ENCODE measurements at regions of chr19 and their contacts with region 1.

Region 1: GRCh38 chr19:4139614-4140236 is 13.7 kb upstream of the CREB3L3 start:
- DNase-seq: peak; percentile 94
- ATAC-seq: peak; percentile 81
- H3K4me3 Mint-ChIP-seq: peak overlapping the region; percentile 31; the same call in 1 of the 2 replicates
- H3K27ac Mint-ChIP-seq: peak overlapping the region; percentile 70; the same call in 1 of the 2 replicates
- H3K4me1 Mint-ChIP-seq: peaks cover 6% of the 10 kb centered on the region
- H3K27me3 Mint-ChIP-seq: peaks cover 18% of the 10 kb centered on the region
- CTCF ChIP-seq: peak; percentile 94

Region 2: DNA sequence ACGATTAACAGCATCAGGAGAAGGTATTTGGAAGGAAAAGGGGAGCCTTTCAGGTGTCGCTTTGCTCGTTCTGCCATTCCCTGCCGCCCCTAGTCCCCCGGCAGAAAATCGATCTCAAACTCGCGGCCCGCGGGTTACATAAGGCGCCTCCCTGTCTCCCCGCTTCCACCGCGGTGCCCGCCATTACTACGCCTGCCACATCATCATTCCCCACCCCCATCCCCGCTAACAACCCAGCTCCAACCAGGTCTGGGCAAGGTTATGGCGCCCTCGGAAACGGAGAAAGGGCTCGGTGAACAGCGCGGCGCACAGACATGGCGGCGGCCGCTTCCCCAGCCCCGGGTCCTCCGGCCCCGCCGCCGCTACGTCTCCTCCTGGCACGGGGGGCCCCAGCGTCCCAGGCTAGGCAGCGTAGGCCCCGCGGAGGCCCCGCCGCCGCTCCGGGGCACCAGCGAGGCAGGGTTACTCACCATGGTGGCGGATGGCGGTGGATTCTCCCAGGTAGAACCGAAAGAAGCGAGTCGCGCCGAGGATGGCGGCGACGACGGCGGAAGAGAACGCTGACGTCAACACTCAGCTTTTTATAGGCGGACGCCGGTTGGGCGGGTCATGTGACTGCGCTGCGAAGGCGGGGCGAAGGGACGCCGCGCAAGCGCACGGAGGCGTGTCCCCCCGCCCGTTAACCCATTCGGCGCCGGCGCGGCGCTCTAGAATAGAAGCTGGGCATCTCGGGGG is 154.7 kb before region 1 on chr19 and contains the start of gene EEF2:
- CTCF ChIA-PET with region 1: interaction called, 27 read pairs
- POLR2A ChIA-PET with region 1: interaction called, 4 read pairs
- DNase-seq: peak; percentile 91
- ATAC-seq: 0 out of 2 replicates have a peak, but pooled peaks have one; percentile 5
- H3K4me3 Mint-ChIP-seq: peak within 1 kb of the TSS; percentile 96
- H3K27ac Mint-ChIP-seq: peak within 1 kb of the TSS; percentile 98
- H3K4me1 Mint-ChIP-seq: peaks cover 39% of the 10 kb centered on the region
- H3K27me3 Mint-ChIP-seq: peaks cover 7% of the 10 kb centered on the region
- CTCF ChIP-seq: no peak
- total RNA-seq, gene EEF2: 3,572 to 3,864 TPM (median 3,852 TPM) in 3 replicates

Region 3: DNA sequence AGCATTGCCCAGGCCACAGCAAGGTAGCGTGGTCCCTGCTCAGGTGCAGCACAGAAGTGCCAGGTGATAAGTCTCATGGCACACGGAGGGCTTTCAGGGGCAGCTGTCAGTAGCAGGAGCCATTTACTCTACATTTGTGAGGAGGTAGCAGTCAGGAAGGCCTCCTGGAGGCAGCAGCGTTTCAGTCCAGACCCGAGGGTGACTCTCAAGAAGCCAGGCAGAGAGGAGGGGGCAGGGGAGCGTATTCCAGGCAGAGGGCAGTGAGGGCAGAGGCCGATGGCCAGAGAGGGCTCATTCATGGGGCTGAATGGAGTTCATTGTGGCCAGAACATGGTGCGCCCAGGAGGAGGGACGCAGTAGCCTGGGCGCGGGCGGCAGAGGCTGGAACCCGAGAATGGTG is 123.2 kb before region 1 on chr19:
- CTCF ChIA-PET with region 1: no interaction called
- POLR2A ChIA-PET with region 1: no interaction called
- DNase-seq: no peak
- ATAC-seq: no peak
- H3K4me3 Mint-ChIP-seq: no peak overlapping the region
- H3K27ac Mint-ChIP-seq: no peak overlapping the region
- H3K4me1 Mint-ChIP-seq: 0 out of 2 replicates have a peak, but pooled peaks cover 3% of the 10 kb centered on the region
- H3K27me3 Mint-ChIP-seq: no peaks in the 10 kb centered on the region
- CTCF ChIP-seq: no peak

Region 4: DNA sequence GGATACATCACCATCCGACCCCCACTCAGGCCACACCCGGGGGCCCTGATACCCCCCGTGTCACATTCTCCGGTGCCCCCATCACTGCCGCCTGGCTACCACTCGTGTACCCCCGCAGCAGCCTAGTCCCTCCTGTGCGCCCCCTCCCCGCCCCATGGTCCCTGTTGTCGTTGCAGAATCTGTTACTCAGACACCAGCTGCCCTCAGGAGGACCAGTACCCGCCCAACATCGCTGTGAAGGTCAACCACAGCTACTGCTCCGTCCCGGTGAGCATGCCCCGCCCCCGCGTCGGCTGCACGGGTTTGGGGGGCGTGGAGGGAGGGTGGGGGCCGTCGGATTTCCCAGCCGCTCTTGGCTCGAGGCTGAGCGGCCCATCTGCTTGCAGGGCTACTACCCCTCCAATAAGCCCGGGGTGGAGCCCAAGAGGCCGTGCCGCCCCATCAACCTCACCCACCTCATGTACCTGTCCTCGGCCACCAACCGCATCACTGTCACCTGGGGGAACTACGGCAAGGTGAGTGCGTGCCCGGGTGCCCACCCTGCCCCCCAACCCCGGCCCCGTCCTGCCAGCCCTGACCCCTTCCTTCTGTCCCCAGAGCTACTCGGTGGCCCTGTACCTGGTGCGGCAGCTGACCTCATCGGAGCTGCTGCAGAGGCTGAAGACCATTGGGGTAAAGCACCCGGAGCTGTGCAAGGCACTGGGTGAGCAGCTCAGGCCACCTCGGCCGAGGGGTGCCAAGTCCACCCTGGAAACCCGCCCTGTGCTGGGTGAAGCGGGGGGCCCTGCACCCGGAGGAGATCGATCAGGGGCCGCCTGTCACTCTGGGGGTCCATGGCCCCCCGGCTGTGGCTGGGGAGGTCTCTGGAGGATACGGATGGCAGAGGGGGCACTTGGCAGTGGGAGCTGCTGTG is 111.1 kb before region 1 on chr19:
- CTCF ChIA-PET with region 1: no interaction called
- POLR2A ChIA-PET with region 1: no interaction called
- DNase-seq: no peak
- ATAC-seq: no peak
- H3K4me3 Mint-ChIP-seq: no peak overlapping the region
- H3K27ac Mint-ChIP-seq: no peak overlapping the region
- H3K4me1 Mint-ChIP-seq: no peaks in the 10 kb centered on the region
- H3K27me3 Mint-ChIP-seq: no peaks in the 10 kb centered on the region
- CTCF ChIP-seq: no peak

Region 5: GRCh38 chr19:4065430-4066175 is 74.1 kb before region 1 on chr19:
- CTCF ChIA-PET with region 1: interaction called, 10 read pairs
- POLR2A ChIA-PET with region 1: no interaction called
- DNase-seq: peak; percentile 97
- ATAC-seq: peak; percentile 81
- H3K4me3 Mint-ChIP-seq: no peak overlapping the region
- H3K27ac Mint-ChIP-seq: no peak overlapping the region
- H3K4me1 Mint-ChIP-seq: peaks cover 26% of the 10 kb centered on the region
- H3K27me3 Mint-ChIP-seq: peaks cover 26% of the 10 kb centered on the region
- CTCF ChIP-seq: no peak

Region 6: GRCh38 chr19:4099054-4099764 is 40.5 kb before region 1 on chr19:
- CTCF ChIA-PET with region 1: interaction called, 10 read pairs
- POLR2A ChIA-PET with region 1: interaction called, 3 read pairs
- DNase-seq: no peak
- ATAC-seq: no peak
- H3K4me3 Mint-ChIP-seq: no peak overlapping the region
- H3K27ac Mint-ChIP-seq: no peak overlapping the region
- H3K4me1 Mint-ChIP-seq: no peaks in the 10 kb centered on the region
- H3K27me3 Mint-ChIP-seq: no peaks in the 10 kb centered on the region
- CTCF ChIP-seq: no peak

Region 7: DNA sequence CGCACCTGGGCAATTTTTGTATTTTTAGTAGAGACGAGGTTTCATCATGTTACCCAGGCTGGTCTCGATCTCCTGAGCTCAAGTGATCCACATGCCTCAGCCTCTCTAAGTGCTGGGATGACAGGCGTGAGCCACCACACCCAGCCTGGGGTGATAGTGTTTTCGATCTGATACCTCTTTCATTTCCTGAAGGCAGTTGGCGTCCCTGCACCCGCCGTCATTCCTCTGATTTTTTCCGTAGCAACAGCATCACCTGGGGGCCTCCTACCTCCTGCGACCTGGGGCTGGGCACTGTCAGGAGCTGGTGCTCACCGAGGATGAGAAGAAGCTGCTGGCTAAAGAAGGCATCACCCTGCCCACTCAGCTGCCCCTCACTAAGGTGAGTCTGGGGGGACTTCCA is 24.5 kb after region 1 on chr19:
- CTCF ChIA-PET with region 1: interaction called, 57 read pairs
- POLR2A ChIA-PET with region 1: no interaction called
- DNase-seq: no peak
- ATAC-seq: no peak
- H3K4me3 Mint-ChIP-seq: no peak overlapping the region
- H3K27ac Mint-ChIP-seq: no peak overlapping the region
- H3K4me1 Mint-ChIP-seq: no peaks in the 10 kb centered on the region
- H3K27me3 Mint-ChIP-seq: peaks cover 20% of the 10 kb centered on the region
- CTCF ChIP-seq: no peak

Region 8: GRCh38 chr19:4208385-4209094 is 68.8 kb after region 1 on chr19:
- CTCF ChIA-PET with region 1: interaction called, 50 read pairs
- POLR2A ChIA-PET with region 1: no interaction called
- DNase-seq: no peak
- ATAC-seq: peak; percentile 57
- H3K4me3 Mint-ChIP-seq: no peak overlapping the region
- H3K27ac Mint-ChIP-seq: peak overlapping the region; percentile 78
- H3K4me1 Mint-ChIP-seq: peaks cover 6% of the 10 kb centered on the region; the same call in 1 of the 2 replicates
- H3K27me3 Mint-ChIP-seq: no peaks in the 10 kb centered on the region
- CTCF ChIP-seq: no peak

Measured in WTC11 (cell line).